ENCODE measurements at regions of chr1 and their contacts with region 1.

Region 1: GRCh38 chr1:177351361-177352119 is 180.8 kb downstream of the BRINP2 start:
- DNase-seq: no peak
- ATAC-seq: peak; percentile 31

Region 2: GRCh38 chr1:177228700-177229080 is 122.8 kb before region 1 on chr1:
- intact Hi-C with region 1: no loop called
- DNase-seq: no peak
- ATAC-seq: no peak

Region 3: GRCh38 chr1:177274687-177275211 is 76.8 kb before region 1 on chr1:
- intact Hi-C with region 1: no loop called
- DNase-seq: no peak
- ATAC-seq: peak; percentile 81

Region 4: GRCh38 chr1:177914603-177915002 is 563.1 kb after region 1 on chr1:
- intact Hi-C with region 1: loop called (anchors 5 kb)
- DNase-seq: no peak
- ATAC-seq: no peak

Measured in sciatic nerve (tissue), 2 donors.